ENCODE measurements at regions of chr10 and their contacts with region 1.

Region 1: GRCh38 chr10:103911021-103911459 is 6.9 kb downstream of the STN1 start:
- DNase-seq: peak; percentile 76 to 86 (median 82)
- H3K4me3 ChIP-seq: peak overlapping the region; percentile 22 to 28
- H3K4me3 Mint-ChIP-seq: peak overlapping the region; percentile 76 to 92 (median 82)
- H3K27ac ChIP-seq: peak overlapping the region; percentile 60
- H3K27ac Mint-ChIP-seq: peak overlapping the region; percentile 92 to 99 (median 97)
- H3K4me1 ChIP-seq: peaks cover 95% of the 10 kb centered on the region
- H3K4me1 Mint-ChIP-seq: peaks cover 57 to 80% (median 67%) of the 10 kb centered on the region in 4 donors
- H3K27me3 ChIP-seq: no peaks in the 10 kb centered on the region
- H3K27me3 Mint-ChIP-seq: no peaks in the 10 kb centered on the region

Region 2: GRCh38 chr10:103828107-103828506 is 82.9 kb before region 1 on chr10:
- CTCF ChIA-PET with region 1: no interaction called
- POLR2A ChIA-PET with region 1: no interaction called
- intact Hi-C with region 1: no loop called
- DNase-seq: no peak
- H3K4me3 ChIP-seq: no peak overlapping the region
- H3K4me3 Mint-ChIP-seq: no peak overlapping the region
- H3K27ac ChIP-seq: no peak overlapping the region
- H3K27ac Mint-ChIP-seq: no peak overlapping the region
- H3K4me1 ChIP-seq: no peaks in the 10 kb centered on the region
- H3K4me1 Mint-ChIP-seq: peaks cover 0 to 9% (median 0%) of the 10 kb centered on the region in 4 donors
- H3K27me3 ChIP-seq: no peaks in the 10 kb centered on the region
- H3K27me3 Mint-ChIP-seq: peaks cover 0 to 2% of the 10 kb centered on the region in 2 donors

Region 3: GRCh38 chr10:103895411-103896186 is 15.4 kb before region 1 on chr10:
- CTCF ChIA-PET with region 1: interaction called, 28 read pairs
- POLR2A ChIA-PET with region 1: interaction called, 25 read pairs
- intact Hi-C with region 1: loop called (anchors 2 kb)
- DNase-seq: no peak
- H3K4me3 ChIP-seq: no peak overlapping the region
- H3K4me3 Mint-ChIP-seq: peak overlapping the region in 4 of 8 donors; percentile 11 to 87 (median 48)
- H3K27ac ChIP-seq: peak overlapping the region; percentile 11
- H3K27ac Mint-ChIP-seq: peak overlapping the region; percentile 38 to 95 (median 86)
- H3K4me1 ChIP-seq: peaks cover 40% of the 10 kb centered on the region
- H3K4me1 Mint-ChIP-seq: peaks cover 39 to 64% (median 51%) of the 10 kb centered on the region in 4 donors
- H3K27me3 ChIP-seq: no peaks in the 10 kb centered on the region
- H3K27me3 Mint-ChIP-seq: no peaks in the 10 kb centered on the region

Region 4: DNA sequence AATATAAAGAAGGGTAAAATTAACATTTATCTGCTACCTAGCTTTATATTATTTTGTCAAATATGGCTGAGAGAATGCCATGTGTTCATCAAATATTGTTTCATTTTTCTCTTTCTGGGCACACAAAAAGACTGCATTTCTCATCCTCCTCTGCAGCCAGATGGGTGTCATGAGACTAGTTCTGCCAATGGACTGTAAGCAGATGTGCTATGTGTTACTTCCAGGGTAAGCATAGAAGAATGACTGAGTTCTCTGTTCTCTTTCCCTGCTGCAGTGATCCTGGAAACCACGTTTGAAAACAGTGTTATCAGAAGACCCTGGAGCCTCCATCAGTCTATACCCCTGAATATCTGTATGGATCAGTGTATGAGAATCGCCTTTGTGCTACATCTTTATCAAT is 31.8 kb after region 1 on chr10:
- CTCF ChIA-PET with region 1: no interaction called
- POLR2A ChIA-PET with region 1: no interaction called
- intact Hi-C with region 1: no loop called
- DNase-seq: no peak
- H3K4me3 ChIP-seq: no peak overlapping the region
- H3K4me3 Mint-ChIP-seq: no peak overlapping the region
- H3K27ac ChIP-seq: no peak overlapping the region
- H3K27ac Mint-ChIP-seq: no peak overlapping the region
- H3K4me1 ChIP-seq: peaks cover 4% of the 10 kb centered on the region
- H3K4me1 Mint-ChIP-seq: peaks cover 3 to 12% (median 6%) of the 10 kb centered on the region in 4 donors
- H3K27me3 ChIP-seq: no peaks in the 10 kb centered on the region
- H3K27me3 Mint-ChIP-seq: peaks cover 0 to 2% of the 10 kb centered on the region in 2 donors

Region 5: GRCh38 chr10:103966671-103967447 is 55.8 kb after region 1 on chr10 and contains the start of gene SLK:
- CTCF ChIA-PET with region 1: interaction called, 4 read pairs
- POLR2A ChIA-PET with region 1: interaction called, 32 read pairs
- intact Hi-C with region 1: loop called (anchors 2 kb)
- DNase-seq: peak; percentile 78 to 90 (median 86)
- H3K4me3 ChIP-seq: peak within 1 kb of the TSS; percentile 59 to 99
- H3K4me3 Mint-ChIP-seq: peak within 1 kb of the TSS; percentile 94 to 100 (median 98)
- H3K27ac ChIP-seq: peak within 1 kb of the TSS; percentile 74
- H3K27ac Mint-ChIP-seq: peak within 1 kb of the TSS; percentile 95 to 98 (median 96)
- H3K4me1 ChIP-seq: peaks cover 33% of the 10 kb centered on the region
- H3K4me1 Mint-ChIP-seq: peaks cover 27 to 48% (median 36%) of the 10 kb centered on the region in 4 donors
- H3K27me3 ChIP-seq: no peaks in the 10 kb centered on the region
- H3K27me3 Mint-ChIP-seq: no peaks in the 10 kb centered on the region
- total RNA-seq, gene SLK: 30.9 to 31.1 TPM

Measured in CD4-positive, alpha-beta memory T cell (primary cell).